ENCODE measurements at regions of chr15 and their contacts with region 1.

Region 1: GRCh38 chr15:30962079-30962478 is 29.3 kb downstream of the MTMR10 start:
- DNase-seq: no peak
- H3K4me3 ChIP-seq: no peak overlapping the region
- H3K27ac ChIP-seq: no peak overlapping the region
- H3K4me1 ChIP-seq: no peaks in the 10 kb centered on the region
- H3K27me3 ChIP-seq: no peaks in the 10 kb centered on the region
- CTCF ChIP-seq: no peak
- POLR2A ChIP-seq: no peak

Region 2: GRCh38 chr15:30973379-30973778 is 11.3 kb after region 1 on chr15:
- CTCF ChIA-PET with region 1: interaction called, 14 read pairs
- POLR2A ChIA-PET with region 1: no interaction called
- dilution Hi-C with region 1: no loop called
- intact Hi-C with region 1: no loop called
- DNase-seq: no peak
- H3K4me3 ChIP-seq: no peak overlapping the region
- H3K27ac ChIP-seq: no peak overlapping the region
- H3K4me1 ChIP-seq: no peaks in the 10 kb centered on the region
- H3K27me3 ChIP-seq: no peaks in the 10 kb centered on the region
- CTCF ChIP-seq: no peak
- POLR2A ChIP-seq: no peak

Region 3: DNA sequence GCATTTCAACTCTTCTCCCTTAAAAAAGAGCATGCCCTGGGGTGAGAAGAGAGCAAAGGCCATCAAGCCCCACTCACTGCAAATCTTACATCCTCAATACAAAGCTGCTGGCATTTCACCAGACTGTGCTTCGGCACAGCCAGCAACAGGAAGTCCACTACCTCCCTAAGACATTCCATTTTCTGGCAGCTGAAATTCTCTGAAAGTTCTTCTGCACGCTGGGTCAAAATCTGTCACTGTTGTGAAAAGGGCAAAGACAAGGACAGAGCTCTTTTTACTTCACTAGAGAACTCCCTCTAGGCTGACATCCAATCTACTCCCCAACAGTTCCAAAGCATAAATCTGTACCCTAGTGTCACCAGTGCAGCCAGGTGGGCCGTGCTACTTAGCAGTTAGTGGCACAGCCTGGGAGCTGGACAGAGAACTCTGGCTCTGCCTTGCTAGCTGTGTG is 23.0 kb after region 1 on chr15:
- CTCF ChIA-PET with region 1: interaction called, 5 read pairs
- POLR2A ChIA-PET with region 1: no interaction called
- dilution Hi-C with region 1: no loop called
- intact Hi-C with region 1: loop called (anchors 2 kb)
- DNase-seq: peak; percentile 61
- H3K4me3 ChIP-seq: peak overlapping the region in 2 of 3 experiments; percentile 19 to 42
- H3K27ac ChIP-seq: peak overlapping the region; percentile 23
- H3K4me1 ChIP-seq: peaks cover 59% of the 10 kb centered on the region
- H3K27me3 ChIP-seq: no peaks in the 10 kb centered on the region
- CTCF ChIP-seq: no peak
- POLR2A ChIP-seq: no peak

Region 4: DNA sequence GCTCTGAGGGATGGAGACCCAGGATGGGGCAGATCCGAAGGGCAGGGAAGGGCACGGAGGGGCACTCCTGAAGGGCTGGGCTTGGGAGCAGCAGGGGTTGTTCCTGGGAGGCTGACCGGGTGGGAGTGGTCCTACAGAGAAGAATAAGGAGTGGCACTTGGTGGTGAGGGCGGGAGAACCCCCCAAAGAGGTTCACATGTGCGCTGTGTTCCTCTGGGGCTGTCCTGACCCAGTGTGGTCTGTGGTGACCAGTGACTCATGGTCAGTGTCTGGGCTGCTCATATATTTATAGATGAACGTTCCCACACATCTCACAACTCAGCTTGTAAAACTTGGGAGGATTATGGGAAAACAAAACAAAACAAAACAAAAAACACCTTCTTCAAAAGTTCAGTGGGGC is 129.4 kb after region 1 on chr15:
- CTCF ChIA-PET with region 1: no interaction called
- POLR2A ChIA-PET with region 1: no interaction called
- dilution Hi-C with region 1: no loop called
- intact Hi-C with region 1: no loop called
- DNase-seq: no peak
- H3K4me3 ChIP-seq: no peak overlapping the region
- H3K27ac ChIP-seq: no peak overlapping the region
- H3K4me1 ChIP-seq: no peaks in the 10 kb centered on the region
- H3K27me3 ChIP-seq: no peaks in the 10 kb centered on the region
- CTCF ChIP-seq: no peak
- POLR2A ChIP-seq: no peak

Measured in endothelial cell of umbilical vein (primary cell).